Endothelial cell of umbilical vein (primary cell): ENCODE measurements at regions of chr15 and their contacts with region 1.

Region 1: GRCh38 chr15:88331280-88331679 is 74.7 kb upstream of the NTRK3 start:
- DNase-seq: peak; percentile 6
- H3K4me3 ChIP-seq: no peak overlapping the region
- H3K27ac ChIP-seq: no peak overlapping the region
- H3K4me1 ChIP-seq: no peaks in the 10 kb centered on the region
- H3K27me3 ChIP-seq: no peaks in the 10 kb centered on the region
- CTCF ChIP-seq: peak; percentile 40
- POLR2A ChIP-seq: no peak

Region 2: GRCh38 chr15:88274553-88275460 is 56.5 kb before region 1 on chr15:
- CTCF ChIA-PET with region 1: no interaction called
- POLR2A ChIA-PET with region 1: no interaction called
- dilution Hi-C with region 1: no loop called
- intact Hi-C with region 1: no loop called
- DNase-seq: peak; percentile 46
- H3K4me3 ChIP-seq: no peak overlapping the region
- H3K27ac ChIP-seq: no peak overlapping the region
- H3K4me1 ChIP-seq: no peaks in the 10 kb centered on the region
- H3K27me3 ChIP-seq: no peaks in the 10 kb centered on the region
- CTCF ChIP-seq: peak; percentile 77 to 92
- POLR2A ChIP-seq: no peak

Region 3: DNA sequence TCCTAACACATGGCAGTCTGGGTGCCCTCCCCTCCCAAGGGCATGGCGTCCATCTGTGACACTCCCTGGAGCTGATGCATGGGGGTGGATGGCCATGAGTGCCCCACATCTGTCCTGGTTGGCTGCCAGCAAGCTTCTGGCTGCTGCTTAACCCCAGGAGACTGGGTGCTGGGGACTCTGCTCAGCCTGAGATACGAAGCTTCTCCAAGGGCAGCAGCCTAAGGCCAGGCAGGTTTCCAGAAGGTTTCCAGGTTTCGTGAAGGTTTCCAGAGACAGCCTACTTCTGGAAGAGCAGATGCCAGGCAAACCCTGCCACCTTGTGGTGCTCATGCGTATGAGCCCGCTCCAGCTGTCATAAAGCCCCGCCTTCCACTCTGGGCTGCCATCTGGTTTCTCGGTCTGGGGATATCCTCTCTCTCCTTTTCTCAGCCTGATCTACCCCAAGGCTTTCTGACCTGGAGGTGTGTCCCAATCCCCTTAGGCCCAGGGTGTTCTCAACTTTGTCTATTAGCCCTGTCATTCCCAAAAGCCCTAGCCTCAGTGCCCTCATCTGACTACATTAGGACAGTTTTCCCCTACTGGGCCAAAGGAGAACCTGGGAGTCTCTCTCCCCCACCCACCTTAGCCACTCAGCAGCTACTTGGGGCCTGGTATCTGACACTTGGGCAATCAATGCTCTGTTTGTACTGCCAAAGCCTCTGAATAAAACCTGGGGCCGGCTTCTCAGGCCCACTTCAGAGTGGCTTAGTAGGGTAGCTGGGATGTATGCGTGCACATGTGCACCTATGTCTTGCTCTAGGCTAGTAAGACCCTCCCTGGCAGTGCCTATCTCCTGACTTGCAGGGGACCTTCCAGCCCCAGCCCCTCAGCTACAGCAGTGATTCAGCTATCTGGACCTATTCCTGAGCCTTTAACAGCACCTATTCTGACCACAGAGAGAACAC is 123.9 kb after region 1 on chr15:
- CTCF ChIA-PET with region 1: no interaction called
- POLR2A ChIA-PET with region 1: no interaction called
- dilution Hi-C with region 1: no loop called
- intact Hi-C with region 1: loop called (anchors 10 kb)
- DNase-seq: peak; percentile 60
- H3K4me3 ChIP-seq: no peak overlapping the region
- H3K27ac ChIP-seq: no peak overlapping the region
- H3K4me1 ChIP-seq: peaks cover 15% of the 10 kb centered on the region
- H3K27me3 ChIP-seq: no peaks in the 10 kb centered on the region
- CTCF ChIP-seq: peak; percentile 77 to 84
- POLR2A ChIP-seq: no peak

Region 4: GRCh38 chr15:89383365-89384175 is 1052.3 kb after region 1 on chr15:
- CTCF ChIA-PET with region 1: no interaction called
- POLR2A ChIA-PET with region 1: no interaction called
- dilution Hi-C with region 1: no loop called
- intact Hi-C with region 1: no loop called
- DNase-seq: no peak
- H3K4me3 ChIP-seq: no peak overlapping the region
- H3K27ac ChIP-seq: no peak overlapping the region
- H3K4me1 ChIP-seq: peaks cover 2% of the 10 kb centered on the region
- H3K27me3 ChIP-seq: peaks cover 58 to 68% of the 10 kb centered on the region in 2 experiments
- CTCF ChIP-seq: no peak
- POLR2A ChIP-seq: no peak